ENCODE measurements at regions of chr15 and their contacts with region 1.

Region 1: GRCh38 chr15:90489514-90489913 is 40.2 kb upstream of the CRTC3 start:
- DNase-seq: no peak
- ATAC-seq: no peak
- H3K4me3 ChIP-seq: no peak overlapping the region
- H3K27ac ChIP-seq: no peak overlapping the region
- H3K4me1 ChIP-seq: no peaks in the 10 kb centered on the region
- H3K27me3 ChIP-seq: no peaks in the 10 kb centered on the region

Region 2: GRCh38 chr15:90286678-90287077 is 202.8 kb before region 1 on chr15:
- intact Hi-C with region 1: no loop called
- DNase-seq: no peak
- ATAC-seq: no peak
- H3K4me3 ChIP-seq: no peak overlapping the region
- H3K27ac ChIP-seq: no peak overlapping the region
- H3K4me1 ChIP-seq: no peaks in the 10 kb centered on the region
- H3K27me3 ChIP-seq: no peaks in the 10 kb centered on the region

Region 3: GRCh38 chr15:90306560-90306959 is 183.0 kb before region 1 on chr15:
- intact Hi-C with region 1: no loop called
- DNase-seq: no peak
- ATAC-seq: no peak
- H3K4me3 ChIP-seq: no peak overlapping the region
- H3K27ac ChIP-seq: peak overlapping the region; percentile 45
- H3K4me1 ChIP-seq: peaks cover 2% of the 10 kb centered on the region
- H3K27me3 ChIP-seq: no peaks in the 10 kb centered on the region

Region 4: GRCh38 chr15:90320061-90320884 is 169.2 kb before region 1 on chr15:
- intact Hi-C with region 1: loop called in 2 of 4 experiments (anchors 5 to 10 kb)
- DNase-seq: peak; percentile 81 to 89 (median 89)
- ATAC-seq: peak; percentile 89
- H3K4me3 ChIP-seq: no peak overlapping the region
- H3K27ac ChIP-seq: no peak overlapping the region
- H3K4me1 ChIP-seq: peaks cover 2% of the 10 kb centered on the region
- H3K27me3 ChIP-seq: no peaks in the 10 kb centered on the region

Measured in right cardiac atrium (tissue), 5 donors.